K562 (cell line): ENCODE measurements at regions of chr6 and their contacts with region 1.

Region 1: GRCh38 chr6:26075063-26075717 is 12.0 kb upstream of the HFE start:
- DNase-seq: peak in 1 of 4 experiments; percentile 44
- ATAC-seq: peak; percentile 22
- H3K4me3 ChIP-seq: no peak overlapping the region
- H3K27ac ChIP-seq: no peak overlapping the region
- H3K4me1 ChIP-seq: peaks cover 10 to 17% of the 10 kb centered on the region in 2 experiments
- H3K27me3 ChIP-seq: no peaks in the 10 kb centered on the region
- CTCF ChIP-seq: no peak
- EP300 ChIP-seq: peak; percentile 45
- POLR2A ChIP-seq: no peak
- RAD21 ChIP-seq: no peak

Region 2: GRCh38 chr6:26087284-26088115 is 12.3 kb after region 1 on chr6 and contains the start of gene HFE:
- CTCF ChIA-PET with region 1: no interaction called
- POLR2A ChIA-PET with region 1: interaction called, 15 read pairs
- in situ Hi-C with region 1: no loop called
- intact Hi-C with region 1: no loop called
- DNase-seq: peak; percentile 59 to 75 (median 66)
- ATAC-seq: peak; percentile 92
- H3K4me3 ChIP-seq: peak within 1 kb of the TSS; percentile 56
- H3K27ac ChIP-seq: peak within 1 kb of the TSS; percentile 67
- H3K4me1 ChIP-seq: peaks cover 9% of the 10 kb centered on the region in 2 experiments; a peak in 4 of 5 replicates
- H3K27me3 ChIP-seq: no peaks in the 10 kb centered on the region
- CTCF ChIP-seq: peak in 1 of 3 experiments; percentile 2; a peak in 1 of 6 replicates
- EP300 ChIP-seq: no peak
- POLR2A ChIP-seq: peak; percentile 56; the same call in 1 of the 2 replicates
- RAD21 ChIP-seq: 0 out of 4 replicates have a peak, but pooled peaks of 1 of the 2 experiments have one; percentile 1
- polyA plus RNA-seq, gene HFE: 0.17 to 0.31 TPM

Region 3: DNA sequence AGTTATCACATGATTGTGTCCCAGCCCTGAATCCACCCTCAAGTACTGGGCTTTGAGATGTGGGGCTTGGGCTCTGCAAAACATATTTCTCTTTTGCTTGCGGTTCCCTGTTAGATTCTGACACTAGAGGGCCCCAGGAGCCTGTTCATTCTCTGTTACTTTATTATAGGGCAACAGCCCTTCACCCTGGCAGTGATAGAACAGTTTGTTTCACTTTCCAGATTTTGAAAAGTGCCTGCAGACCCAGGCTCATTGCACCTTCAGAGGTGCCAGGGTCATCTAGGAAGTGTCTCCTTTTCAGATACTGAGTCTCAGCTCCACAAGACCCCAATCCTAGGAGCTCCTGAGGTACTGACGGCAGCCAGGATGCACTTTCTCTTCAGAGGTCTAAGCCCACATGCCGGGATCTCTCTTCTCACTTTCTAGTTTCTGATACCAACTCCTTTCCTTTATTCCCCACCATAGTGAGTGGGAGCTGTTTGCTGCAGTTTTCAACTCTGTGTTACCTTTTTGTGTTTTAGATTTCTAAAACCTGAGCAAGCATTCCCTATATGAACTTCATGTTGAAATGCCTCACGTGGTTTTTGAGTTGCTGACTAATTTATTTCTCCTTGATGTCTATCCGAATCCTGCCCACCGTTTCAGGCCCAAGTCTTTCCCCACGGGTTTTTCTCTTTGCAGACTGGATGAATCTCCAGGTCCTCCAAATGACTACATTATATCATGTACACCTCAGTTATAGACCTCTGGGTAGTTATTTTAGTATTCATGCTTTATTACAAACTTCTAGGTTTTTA is 532.4 kb after region 1 on chr6:
- CTCF ChIA-PET with region 1: no interaction called
- POLR2A ChIA-PET with region 1: no interaction called
- in situ Hi-C with region 1: no loop called
- intact Hi-C with region 1: no loop called
- DNase-seq: peak; percentile 56 to 81 (median 70)
- ATAC-seq: peak; percentile 96
- H3K4me3 ChIP-seq: no peak overlapping the region
- H3K27ac ChIP-seq: no peak overlapping the region
- H3K4me1 ChIP-seq: peaks cover 0 to 10% of the 10 kb centered on the region in 2 experiments; a peak in 3 of 5 replicates
- H3K27me3 ChIP-seq: no peaks in the 10 kb centered on the region
- CTCF ChIP-seq: peak; percentile 83 to 93 (median 92)
- EP300 ChIP-seq: no peak
- POLR2A ChIP-seq: no peak
- RAD21 ChIP-seq: peak; percentile 96